ENCODE measurements at regions of chr7 and their contacts with region 1.

Region 1: GRCh38 chr7:101153969-101154692 is at the start of gene AP1S1:
- DNase-seq: peak; percentile 92
- H3K4me3 Mint-ChIP-seq: peak within 1 kb of the TSS; percentile 83
- H3K27ac Mint-ChIP-seq: peak within 1 kb of the TSS; percentile 57
- H3K4me1 Mint-ChIP-seq: peaks cover 14% of the 10 kb centered on the region
- H3K27me3 Mint-ChIP-seq: peaks cover 15% of the 10 kb centered on the region
- total RNA-seq, gene AP1S1: 45.7 and 53.3 TPM in 2 replicates

Region 2: GRCh38 chr7:101138213-101138870 is 15.8 kb before region 1 on chr7:
- intact Hi-C with region 1: loop called (anchors 1 kb)
- DNase-seq: peak; percentile 64
- H3K4me3 Mint-ChIP-seq: peak overlapping the region; percentile 67
- H3K27ac Mint-ChIP-seq: peak overlapping the region; percentile 79
- H3K4me1 Mint-ChIP-seq: peaks cover 57% of the 10 kb centered on the region
- H3K27me3 Mint-ChIP-seq: peaks cover 28% of the 10 kb centered on the region

Region 3: GRCh38 chr7:101165075-101165957 is 11.2 kb after region 1 on chr7 and contains the start of gene VGF:
- intact Hi-C with region 1: loop called (anchors 1 kb)
- DNase-seq: peak; percentile 92
- H3K4me3 Mint-ChIP-seq: peak within 1 kb of the TSS; percentile 85
- H3K27ac Mint-ChIP-seq: peak within 1 kb of the TSS; percentile 82
- H3K4me1 Mint-ChIP-seq: peaks cover 52% of the 10 kb centered on the region
- H3K27me3 Mint-ChIP-seq: peaks cover 61% of the 10 kb centered on the region
- total RNA-seq, gene VGF: 0.10 and 0.21 TPM in 2 replicates

Region 4: DNA sequence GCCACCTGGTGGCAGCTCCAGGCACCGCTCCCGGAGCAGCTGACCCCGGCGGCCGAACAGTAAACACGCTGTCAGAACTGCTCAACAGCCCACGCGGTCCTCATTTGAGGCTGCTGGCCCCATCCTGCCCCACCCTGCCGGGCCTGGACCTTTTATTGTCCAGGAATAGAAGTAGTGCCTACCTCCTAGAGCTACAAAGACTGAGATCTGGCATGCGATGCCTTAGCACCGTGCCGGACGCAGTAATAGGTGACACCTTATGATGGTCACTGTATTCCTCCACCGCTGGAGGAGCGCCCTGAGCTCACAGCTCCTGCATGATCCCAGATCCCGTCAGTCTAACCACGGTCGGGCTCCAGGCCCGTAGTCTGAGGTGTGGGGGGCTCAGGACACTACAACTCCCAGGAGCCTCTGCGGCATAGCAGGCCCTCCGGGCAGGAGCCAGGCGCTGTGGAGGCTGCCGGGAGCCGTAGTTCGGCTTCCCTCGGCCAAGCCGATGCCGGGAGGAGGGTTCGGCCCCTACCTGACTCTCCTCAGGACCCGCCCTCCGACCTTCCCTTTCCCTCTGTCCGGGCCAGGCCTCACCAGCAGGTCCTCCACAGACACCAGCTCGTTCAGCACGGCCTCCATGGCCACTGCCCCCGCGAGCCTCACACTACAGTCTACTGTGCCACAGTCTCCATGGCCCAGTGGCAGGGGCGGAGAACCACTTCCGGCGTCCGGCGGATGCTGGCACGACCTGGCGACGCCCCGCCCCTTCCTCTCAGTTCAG is 90.4 kb after region 1 on chr7 and contains the start of gene FIS1:
- intact Hi-C with region 1: loop called (anchors 1 kb)
- DNase-seq: peak; percentile 91
- H3K4me3 Mint-ChIP-seq: peak within 1 kb of the TSS; percentile 94
- H3K27ac Mint-ChIP-seq: peak within 1 kb of the TSS; percentile 98
- H3K4me1 Mint-ChIP-seq: peaks cover 24% of the 10 kb centered on the region
- H3K27me3 Mint-ChIP-seq: no peaks in the 10 kb centered on the region
- total RNA-seq, gene FIS1: 138 and 143 TPM in 2 replicates

Region 5: DNA sequence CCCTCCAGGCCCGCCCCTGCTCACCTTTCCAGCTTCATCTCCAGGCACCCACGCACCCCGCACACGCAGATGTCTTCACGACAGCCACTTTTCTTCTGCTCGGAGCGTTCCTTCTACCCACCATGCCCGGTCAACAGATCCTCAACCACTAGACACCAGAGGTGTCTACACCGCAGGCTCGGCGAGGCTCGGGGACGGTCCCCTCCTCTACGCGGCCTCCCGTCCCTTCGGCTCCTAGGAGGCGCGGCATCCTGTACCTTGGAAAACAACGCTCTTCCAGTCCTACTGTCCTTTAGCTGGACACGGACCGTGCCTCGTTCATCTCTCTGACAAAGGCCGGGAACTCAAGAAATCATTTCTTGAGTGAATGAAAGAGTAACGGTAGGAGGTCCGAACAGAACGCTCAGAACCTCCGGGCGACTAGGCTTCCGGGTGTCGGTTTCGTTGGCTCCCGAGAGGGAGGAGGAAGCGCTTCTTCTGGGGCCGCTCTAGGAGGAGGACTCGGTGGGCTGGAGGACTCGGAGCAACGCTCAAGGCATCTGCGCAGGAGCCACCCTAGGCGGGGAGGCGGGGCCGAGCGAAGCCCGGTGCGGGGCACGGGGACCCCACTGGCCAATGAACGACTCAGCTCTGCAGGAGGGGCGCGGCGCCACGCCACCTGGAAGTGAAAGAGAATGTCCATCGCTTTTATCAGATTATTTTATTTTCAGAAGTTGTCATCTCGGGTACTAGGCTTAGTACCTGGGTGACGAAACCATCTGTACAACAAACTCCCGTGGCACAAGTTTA is 97.9 kb after region 1 on chr7:
- intact Hi-C with region 1: loop called (anchors 1 kb)
- DNase-seq: peak; percentile 98
- H3K4me3 Mint-ChIP-seq: peak overlapping the region; percentile 98
- H3K27ac Mint-ChIP-seq: peak overlapping the region; percentile 98
- H3K4me1 Mint-ChIP-seq: peaks cover 30% of the 10 kb centered on the region
- H3K27me3 Mint-ChIP-seq: peaks cover 5% of the 10 kb centered on the region